AG04450 (cell line): ENCODE measurements at regions of chr6 and their contacts with region 1.

Region 1: DNA sequence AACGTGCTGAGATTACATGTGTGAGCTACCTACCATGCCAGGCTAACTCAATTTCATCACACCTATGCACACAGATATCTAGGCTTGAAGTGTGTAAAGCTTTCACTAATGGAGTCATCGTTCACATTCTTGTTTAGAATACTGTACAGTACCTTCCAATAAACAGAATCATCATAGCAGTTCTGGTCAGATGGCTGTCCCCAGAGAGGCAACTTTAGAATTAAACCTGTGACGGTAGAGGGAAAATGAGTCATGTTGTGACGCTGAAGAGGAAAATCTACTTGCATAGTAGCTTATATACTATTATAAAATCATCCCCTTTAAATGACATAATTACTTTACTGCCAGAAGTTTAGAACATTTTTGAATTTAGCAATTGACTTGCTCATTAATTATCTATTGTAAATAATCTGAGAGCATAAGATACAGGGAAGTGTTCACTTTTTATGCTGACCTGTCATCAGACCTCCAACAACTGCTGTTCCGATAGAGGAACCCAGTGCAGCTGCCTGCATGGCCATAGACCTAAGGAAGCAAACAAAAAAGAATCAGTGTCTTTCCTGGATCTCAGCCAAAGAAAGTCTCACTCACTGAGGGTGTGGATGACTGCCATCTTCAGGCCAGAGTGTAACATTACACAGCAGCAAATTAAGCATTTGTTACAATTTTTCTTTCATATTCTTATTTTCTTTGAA is 29.8 kb downstream of the RHAG start:
- DNase-seq: peak; percentile 74
- H3K4me3 ChIP-seq: no peak overlapping the region
- H3K27ac ChIP-seq: no peak overlapping the region
- H3K27me3 ChIP-seq: no peaks in the 10 kb centered on the region
- CTCF ChIP-seq: peak; percentile 89

Region 2: DNA sequence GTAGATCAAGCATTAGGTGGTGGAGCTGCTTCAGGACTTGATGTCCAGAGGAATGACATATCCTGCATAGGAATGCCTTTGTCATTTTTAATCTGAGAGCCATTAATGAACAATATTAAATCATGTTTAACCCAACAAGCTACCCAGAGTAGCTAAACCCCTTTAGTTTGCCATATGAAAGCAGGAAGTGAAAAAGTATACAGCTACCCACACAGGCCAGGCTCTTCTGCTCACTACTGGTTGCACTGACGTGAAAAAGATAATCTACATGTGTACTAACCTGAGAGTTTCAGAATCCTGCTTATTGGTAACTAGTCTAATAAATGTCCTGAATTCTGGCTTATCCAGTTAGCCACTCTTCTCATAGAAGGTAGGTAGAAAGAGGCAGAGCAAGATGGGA is 87.2 kb before region 1 on chr6:
- CTCF ChIA-PET with region 1: interaction called, 10 read pairs
- POLR2A ChIA-PET with region 1: no interaction called
- DNase-seq: no peak
- H3K4me3 ChIP-seq: no peak overlapping the region
- H3K27ac ChIP-seq: no peak overlapping the region
- H3K27me3 ChIP-seq: peaks cover 2% of the 10 kb centered on the region
- CTCF ChIP-seq: no peak

Region 3: DNA sequence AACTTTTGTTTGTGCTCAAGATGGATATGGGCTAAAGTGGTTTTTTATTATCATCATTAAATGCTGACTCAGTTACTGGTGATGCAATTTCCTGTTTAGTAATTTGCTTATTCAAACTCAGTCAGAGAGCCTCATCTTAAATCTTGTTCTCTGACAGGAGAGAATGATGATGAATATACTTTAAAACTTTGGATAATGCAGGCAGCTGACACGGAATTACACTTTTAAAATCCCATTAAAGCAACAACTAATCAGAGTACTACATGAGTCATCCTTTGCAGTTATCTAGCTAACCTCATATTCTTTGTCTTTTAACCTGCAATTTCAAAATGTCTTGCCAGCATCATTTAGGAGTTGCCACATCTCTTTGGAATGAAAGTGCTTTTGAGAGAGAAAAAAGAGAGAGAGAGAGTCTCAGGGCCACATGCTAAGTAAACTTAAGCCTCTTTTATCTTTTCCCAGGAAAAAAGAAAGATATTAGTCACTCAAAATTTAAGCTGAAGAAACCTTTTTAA is 65.6 kb before region 1 on chr6:
- CTCF ChIA-PET with region 1: interaction called, 16 read pairs
- POLR2A ChIA-PET with region 1: no interaction called
- DNase-seq: peak; percentile 18
- H3K4me3 ChIP-seq: no peak overlapping the region
- H3K27ac ChIP-seq: no peak overlapping the region
- H3K27me3 ChIP-seq: no peaks in the 10 kb centered on the region
- CTCF ChIP-seq: no peak

Region 4: DNA sequence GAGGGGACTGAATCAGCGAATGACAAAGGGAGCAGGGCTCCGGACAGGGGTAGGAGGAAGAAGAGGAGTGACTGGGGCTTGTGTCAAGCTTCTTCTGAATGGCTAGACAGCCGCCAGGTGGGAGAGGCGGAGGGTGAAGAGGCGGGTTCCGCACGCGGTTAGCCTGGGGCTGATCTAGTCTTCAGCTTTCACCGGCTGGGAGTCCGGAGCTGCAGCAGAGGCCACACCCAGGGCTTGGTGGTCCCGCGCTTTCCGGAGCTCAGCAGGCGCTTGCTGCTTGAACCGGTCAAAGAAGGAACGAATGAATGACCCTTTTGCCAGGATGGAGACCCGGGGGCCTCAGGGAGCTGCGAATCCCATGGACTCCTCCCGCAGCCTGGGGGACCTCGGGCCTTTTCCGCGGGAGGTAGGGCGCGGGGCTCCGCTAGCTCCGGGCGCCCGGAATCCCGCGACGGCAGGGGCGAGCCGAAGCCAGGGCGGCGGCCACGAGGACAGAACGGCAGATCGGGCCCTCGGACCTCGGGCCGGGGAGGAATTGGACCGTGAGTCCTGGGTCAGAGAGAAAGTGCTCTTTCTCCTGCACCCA is 56.3 kb before region 1 on chr6 and contains the start of gene C6orf141:
- CTCF ChIA-PET with region 1: interaction called, 26 read pairs
- POLR2A ChIA-PET with region 1: no interaction called
- DNase-seq: no peak
- H3K4me3 ChIP-seq: peak within 1 kb of the TSS; percentile 43
- H3K27ac ChIP-seq: no peak within 1 kb of the TSS
- H3K27me3 ChIP-seq: peaks cover 16% of the 10 kb centered on the region
- CTCF ChIP-seq: no peak
- polyA plus RNA-seq, gene C6orf141: not detected in 2 replicates

Region 5: GRCh38 chr6:49625140-49625539 is 18.3 kb after region 1 on chr6:
- CTCF ChIA-PET with region 1: interaction called, 15 read pairs
- POLR2A ChIA-PET with region 1: no interaction called
- DNase-seq: no peak
- H3K4me3 ChIP-seq: no peak overlapping the region
- H3K27ac ChIP-seq: no peak overlapping the region
- H3K27me3 ChIP-seq: no peaks in the 10 kb centered on the region
- CTCF ChIP-seq: no peak

Region 6: DNA sequence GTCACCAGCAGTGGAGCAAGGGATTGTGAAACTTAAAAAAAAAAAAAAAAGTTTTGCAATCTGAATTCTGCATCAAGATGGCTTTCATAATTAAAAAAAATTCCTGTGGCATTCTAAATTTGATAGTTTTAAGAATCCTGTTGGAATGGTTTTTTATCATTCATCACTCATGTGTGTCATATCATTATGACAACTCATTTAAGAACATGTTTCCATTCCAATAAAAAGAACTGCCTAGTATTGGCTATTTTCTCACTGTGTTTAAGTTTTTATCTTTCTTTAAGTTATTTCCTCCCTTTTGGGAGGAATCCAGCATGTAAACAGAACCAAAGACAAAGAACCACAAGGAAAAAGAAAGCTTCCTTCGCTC is 56.0 kb after region 1 on chr6:
- CTCF ChIA-PET with region 1: no interaction called
- POLR2A ChIA-PET with region 1: no interaction called
- DNase-seq: no peak
- H3K4me3 ChIP-seq: no peak overlapping the region
- H3K27ac ChIP-seq: no peak overlapping the region
- H3K27me3 ChIP-seq: no peaks in the 10 kb centered on the region
- CTCF ChIP-seq: no peak